Activated CD8-positive, alpha-beta memory T cell treated with anti-CD3 and anti-CD28 coated beads, Interleukin-2, amount 10 ng/mL, durations not matched to agents 7 days and 5 days (primary cell): ENCODE measurements at regions of chr1 and their contacts with region 1.

Region 1: DNA sequence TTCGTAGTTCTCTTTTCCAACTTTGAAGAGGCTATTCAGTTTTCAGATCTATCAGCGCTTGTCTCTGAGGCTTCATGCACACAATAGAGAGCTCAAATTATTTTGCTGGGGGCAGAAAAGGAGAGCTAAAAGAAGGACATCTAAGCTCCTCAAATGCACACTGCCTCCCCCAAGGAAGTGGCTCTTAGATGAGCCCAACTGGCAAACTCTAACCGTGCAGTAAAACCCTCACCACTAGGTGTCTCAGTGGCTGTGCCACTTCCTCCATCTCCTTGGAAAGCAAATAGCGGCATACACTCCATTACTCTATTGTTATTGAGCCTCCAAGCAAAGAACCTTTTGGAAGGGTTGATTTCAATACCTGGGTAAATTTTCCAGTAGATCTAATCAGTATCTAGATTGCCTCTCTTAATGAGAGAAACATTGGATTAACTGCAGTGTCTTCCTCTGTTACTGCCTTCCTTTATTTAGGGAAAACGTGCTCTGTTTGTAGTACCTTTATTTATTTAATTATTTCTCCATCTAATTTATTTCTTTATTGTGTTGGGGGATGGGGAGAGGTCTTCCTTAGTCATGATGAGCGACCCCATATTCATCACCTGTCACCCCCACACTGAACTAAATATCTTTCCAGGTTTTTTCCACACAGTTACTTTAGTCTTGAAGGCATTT is 9.2 kb upstream of the SFPQ start:
- DNase-seq: peak; percentile 86
- ATAC-seq: peak; percentile 100
- H3K4me3 Mint-ChIP-seq: no peak overlapping the region
- H3K27ac Mint-ChIP-seq: no peak overlapping the region
- H3K4me1 Mint-ChIP-seq: peaks cover 7% of the 10 kb centered on the region
- H3K27me3 Mint-ChIP-seq: peaks cover 8% of the 10 kb centered on the region

Region 2: GRCh38 chr1:35016406-35016805 is 185.8 kb before region 1 on chr1:
- CTCF ChIA-PET with region 1: no interaction called
- DNase-seq: no peak
- ATAC-seq: no peak
- H3K4me3 Mint-ChIP-seq: no peak overlapping the region
- H3K27ac Mint-ChIP-seq: no peak overlapping the region
- H3K4me1 Mint-ChIP-seq: peaks cover 1% of the 10 kb centered on the region
- H3K27me3 Mint-ChIP-seq: no peaks in the 10 kb centered on the region

Region 3: GRCh38 chr1:35136780-35137179 is 65.4 kb before region 1 on chr1:
- CTCF ChIA-PET with region 1: no interaction called
- DNase-seq: no peak
- ATAC-seq: no peak
- H3K4me3 Mint-ChIP-seq: no peak overlapping the region
- H3K27ac Mint-ChIP-seq: no peak overlapping the region
- H3K4me1 Mint-ChIP-seq: no peaks in the 10 kb centered on the region
- H3K27me3 Mint-ChIP-seq: no peaks in the 10 kb centered on the region

Region 4: GRCh38 chr1:35298464-35298863 is 96.3 kb after region 1 on chr1:
- CTCF ChIA-PET with region 1: interaction called, 10 read pairs
- DNase-seq: peak; percentile 43
- ATAC-seq: peak; percentile 76
- H3K4me3 Mint-ChIP-seq: no peak overlapping the region
- H3K27ac Mint-ChIP-seq: no peak overlapping the region
- H3K4me1 Mint-ChIP-seq: no peaks in the 10 kb centered on the region
- H3K27me3 Mint-ChIP-seq: no peaks in the 10 kb centered on the region